GM10248 (cell line): ENCODE measurements at regions of chr10 and their contacts with region 1.

Region 1: DNA sequence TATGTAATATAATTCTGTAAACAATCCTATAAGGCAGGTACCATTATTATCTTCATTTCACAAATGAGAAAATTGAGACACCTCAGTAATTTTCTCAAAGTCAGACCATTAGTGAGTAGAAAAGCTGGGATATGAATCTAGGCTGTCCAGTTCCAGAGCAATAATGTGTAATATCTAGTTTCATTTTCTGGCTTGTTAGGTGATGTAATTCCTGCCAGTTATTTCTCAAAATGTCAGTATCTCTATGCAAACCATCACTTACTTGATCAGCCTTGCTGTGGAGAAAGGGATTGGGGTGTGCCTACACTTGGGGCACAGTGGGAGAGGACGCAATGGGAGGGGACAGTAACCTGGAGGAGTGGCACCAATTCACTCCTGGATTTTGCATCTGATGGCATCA is 157.5 kb downstream of the LYZL1 start:
- DNase-seq: no peak
- CTCF ChIP-seq: no peak

Region 2: DNA sequence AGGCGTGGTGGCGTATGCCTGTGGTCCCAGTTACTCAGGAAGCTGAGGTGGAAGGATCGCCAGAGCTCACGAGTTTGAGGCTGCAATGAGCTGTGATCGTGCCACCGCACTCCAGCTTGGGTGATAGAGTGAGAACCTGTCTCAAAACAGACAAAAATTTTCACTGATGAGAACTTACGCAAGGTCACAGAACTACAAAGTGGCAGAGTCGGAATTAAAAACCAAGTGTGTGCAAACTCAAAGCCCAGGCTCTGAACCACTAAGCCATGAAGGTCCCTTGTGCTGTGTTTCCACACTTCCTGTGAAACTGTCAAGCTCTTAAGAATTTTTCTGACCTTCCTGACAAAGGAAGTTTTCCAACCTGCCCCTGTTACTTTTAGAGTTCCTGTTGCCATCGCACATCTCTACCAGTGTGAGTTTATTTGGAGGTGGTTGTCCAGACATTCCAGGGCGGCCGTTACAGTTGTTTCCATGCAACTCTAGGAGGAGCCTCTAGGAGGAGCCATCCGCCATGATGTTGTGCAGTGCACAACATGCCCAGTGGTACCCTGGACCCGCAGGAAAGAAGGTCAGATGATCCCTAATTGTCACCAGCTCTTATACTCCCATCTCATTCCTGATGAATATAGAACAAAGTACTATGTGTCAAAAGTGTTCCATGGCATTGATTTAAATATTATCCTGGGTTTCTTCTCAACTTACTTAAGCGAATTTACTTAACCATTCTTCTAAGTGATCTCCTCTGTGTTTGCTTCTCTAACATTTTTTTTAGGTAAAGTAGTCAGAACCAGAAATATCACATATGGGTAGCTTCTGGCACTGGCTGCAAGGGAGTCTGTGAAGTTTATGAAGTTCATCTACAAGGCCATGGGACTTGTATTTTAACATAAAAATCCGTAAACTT is 206.5 kb before region 1 on chr10:
- CTCF ChIA-PET with region 1: no interaction called
- POLR2A ChIA-PET with region 1: no interaction called
- DNase-seq: peak; percentile 38
- CTCF ChIP-seq: peak; percentile 46

Region 3: DNA sequence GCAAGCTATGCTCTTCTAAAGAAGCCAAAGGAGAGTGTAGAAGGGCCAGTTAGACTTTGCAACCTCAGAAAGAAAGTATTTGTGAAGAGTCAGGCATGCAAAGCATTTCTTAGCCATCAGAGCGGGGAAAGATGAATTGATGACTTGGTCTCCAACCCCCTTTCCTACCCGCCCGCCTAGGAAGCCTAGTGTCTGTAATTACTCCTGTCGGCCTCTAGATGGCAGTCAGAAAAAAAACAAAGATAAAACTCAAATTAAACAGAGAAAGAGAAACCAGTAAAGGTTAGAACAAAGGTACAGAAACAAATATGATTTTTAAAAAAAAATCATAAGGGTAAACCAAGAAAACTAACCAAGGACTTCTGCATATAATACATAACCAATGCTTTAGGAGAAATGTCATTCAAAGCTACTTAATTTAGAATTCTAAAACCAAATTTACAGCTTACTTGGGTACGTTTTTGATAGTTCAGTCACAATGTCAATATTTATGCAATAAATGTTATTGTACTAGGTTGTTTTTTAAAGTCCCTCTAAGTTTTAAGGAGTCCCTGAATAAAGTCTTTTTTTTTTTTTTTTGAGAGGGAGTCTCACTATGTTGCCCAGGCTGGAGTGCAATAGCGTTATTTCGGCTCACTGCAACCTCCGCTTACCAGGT is 59.9 kb before region 1 on chr10:
- CTCF ChIA-PET with region 1: interaction called, 24 read pairs
- POLR2A ChIA-PET with region 1: no interaction called
- DNase-seq: peak; percentile 39
- CTCF ChIP-seq: peak; percentile 66

Region 4: DNA sequence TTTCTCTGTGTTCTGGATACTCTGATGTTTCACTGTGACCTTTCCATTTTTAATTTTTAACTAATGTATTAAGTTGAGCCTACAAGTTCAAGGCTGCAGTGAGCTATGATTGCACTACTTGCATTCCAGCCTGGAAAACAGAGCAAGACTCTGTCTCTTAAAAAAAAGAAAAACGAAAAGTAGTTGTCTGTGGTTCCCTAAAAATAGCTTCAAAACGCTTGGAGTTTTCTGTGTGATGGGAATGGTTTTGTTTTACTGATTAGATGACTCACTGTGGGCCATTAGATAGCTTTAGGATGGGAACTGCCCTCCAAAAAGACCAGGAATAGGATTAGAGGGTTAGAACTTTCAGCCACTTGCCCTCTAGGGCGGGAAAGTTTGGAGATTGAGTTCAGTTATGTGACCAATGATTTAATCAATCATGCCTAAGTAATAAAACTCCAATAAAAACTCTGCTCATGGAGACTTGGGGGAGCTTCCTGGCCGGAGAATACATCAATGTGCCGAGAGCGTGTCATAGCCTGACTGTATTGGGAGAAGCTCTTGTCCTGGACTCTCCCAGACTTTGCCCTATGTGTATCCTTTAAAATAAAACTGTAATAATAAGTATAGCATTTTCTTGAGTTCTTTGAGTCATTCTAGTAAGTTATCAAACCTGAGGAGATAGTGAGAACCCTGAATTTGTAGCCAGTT is 10.4 kb before region 1 on chr10:
- CTCF ChIA-PET with region 1: interaction called, 10 read pairs
- POLR2A ChIA-PET with region 1: no interaction called
- DNase-seq: no peak
- CTCF ChIP-seq: no peak

Region 5: DNA sequence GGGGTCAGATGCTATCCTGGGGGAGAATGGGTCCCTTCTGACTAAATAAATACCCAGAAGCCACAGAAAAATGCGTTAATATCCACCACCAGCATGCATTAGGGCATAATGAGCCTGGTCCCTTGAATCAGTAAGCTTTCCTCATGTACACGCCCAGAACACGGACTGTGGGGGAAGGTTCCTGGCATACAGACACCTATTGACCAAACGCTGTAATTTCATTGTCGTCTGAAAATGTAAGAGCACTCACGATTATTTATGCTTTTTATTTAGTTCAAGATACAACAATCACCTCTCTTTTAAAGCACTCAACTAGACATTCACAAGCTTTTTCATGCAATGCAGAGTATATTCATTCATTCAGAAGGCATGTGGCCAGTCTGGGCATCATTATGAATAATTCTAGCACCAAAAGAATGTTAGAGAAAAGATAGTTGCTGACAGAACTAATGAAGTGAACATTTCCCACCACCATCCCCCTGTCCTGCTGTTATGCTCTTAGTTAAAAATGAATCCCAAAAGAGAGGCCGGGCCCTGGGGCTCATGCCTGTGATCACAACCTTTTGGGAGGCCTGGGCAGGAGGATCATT is 87.5 kb after region 1 on chr10:
- CTCF ChIA-PET with region 1: no interaction called
- POLR2A ChIA-PET with region 1: no interaction called
- DNase-seq: no peak
- CTCF ChIP-seq: no peak